Adrenal gland (tissue), 19 donors: ENCODE measurements at regions of chr2 and their contacts with region 1.

Region 1: DNA sequence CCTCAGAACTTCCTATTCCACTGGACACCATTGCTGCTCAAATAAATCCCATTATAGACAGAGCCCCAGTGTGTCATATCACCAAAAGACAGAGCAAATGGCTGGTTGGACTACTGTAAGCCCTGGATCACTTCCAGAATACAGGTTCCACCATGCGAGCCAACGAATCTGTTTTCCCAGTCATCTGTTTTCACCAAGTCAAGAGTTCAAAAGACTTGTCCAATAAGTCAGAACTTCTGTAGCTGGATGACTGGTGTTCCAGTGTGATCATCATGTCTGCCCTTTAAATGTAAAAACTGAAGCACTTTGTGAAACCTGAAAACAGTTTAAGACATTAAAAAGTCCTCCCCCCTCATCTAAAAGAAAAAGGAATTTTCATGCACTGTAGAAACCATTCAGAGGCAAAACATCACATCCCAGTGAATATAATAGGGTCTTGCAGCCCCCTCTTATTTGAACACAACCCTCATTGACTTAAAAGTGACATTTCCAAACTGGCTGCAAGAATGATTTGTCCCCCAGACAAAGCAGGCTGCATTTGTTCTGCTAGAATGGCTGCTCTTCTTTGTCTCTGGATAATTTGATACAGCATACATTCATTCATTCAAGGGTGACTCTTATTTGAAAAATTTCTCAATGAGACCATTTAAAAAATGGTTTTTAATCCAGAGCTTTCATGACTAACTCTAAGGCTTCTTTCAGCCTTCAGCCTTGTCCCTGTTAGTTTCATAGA is 64.6 kb upstream of the TANC1 start:
- DNase-seq: no peak
- H3K4me3 ChIP-seq: no peak overlapping the region
- H3K27ac ChIP-seq: no peak overlapping the region
- H3K4me1 ChIP-seq: no peaks in the 10 kb centered on the region
- H3K27me3 ChIP-seq: no peaks in the 10 kb centered on the region
- CTCF ChIP-seq: no peak
- POLR2A ChIP-seq: no peak

Region 2: DNA sequence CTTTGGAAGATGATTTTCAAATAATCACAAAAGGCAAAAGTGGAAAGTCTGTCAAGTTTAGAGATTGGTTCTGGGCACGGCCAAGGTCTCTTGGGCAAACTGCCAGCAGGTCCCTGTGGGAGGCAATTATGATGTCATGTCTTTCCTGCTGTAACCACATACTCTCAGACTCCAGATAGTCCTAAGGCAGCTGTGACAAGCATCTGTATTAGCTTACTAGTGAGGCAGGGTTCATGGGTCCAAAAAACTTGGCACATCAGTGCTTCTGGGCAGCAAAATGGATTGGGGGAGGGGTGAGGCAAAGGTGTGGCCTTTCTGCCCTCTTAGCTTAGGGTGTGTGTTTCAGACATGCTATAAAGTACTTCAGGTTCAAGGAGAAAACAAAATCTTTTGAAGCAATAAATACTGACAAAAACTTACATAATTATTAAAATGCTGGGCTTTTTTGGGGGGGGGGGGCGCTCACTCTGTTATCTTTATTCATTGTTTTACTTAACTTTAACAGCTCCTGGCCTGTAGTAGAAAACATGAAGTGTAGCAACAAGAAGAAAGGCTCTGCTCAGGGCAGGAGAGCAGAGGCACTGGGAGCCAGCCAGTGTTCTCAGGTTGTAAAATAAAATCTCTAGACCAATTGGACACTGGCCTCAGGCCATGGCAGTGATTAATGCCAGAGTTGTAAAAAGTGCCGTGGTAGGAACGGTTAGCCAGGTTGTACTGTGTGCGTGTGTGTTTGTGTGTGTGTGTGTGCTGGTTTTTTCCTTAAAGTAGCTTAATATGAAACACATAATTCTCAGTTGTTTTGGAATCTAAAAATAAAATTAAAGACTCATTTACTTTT is 50.3 kb after region 1 on chr2:
- intact Hi-C with region 1: loop called (anchors 10 kb)
- DNase-seq: peak; percentile 68 to 90 (median 82)
- H3K4me3 ChIP-seq: no peak overlapping the region
- H3K27ac ChIP-seq: peak overlapping the region in 3 of 5 donors; percentile 26 to 43 (median 43)
- H3K4me1 ChIP-seq: peaks cover 8 to 12% of the 10 kb centered on the region in 2 donors
- H3K27me3 ChIP-seq: no peaks in the 10 kb centered on the region
- CTCF ChIP-seq: no peak
- POLR2A ChIP-seq: peak in 1 of 2 donors; percentile 8

Region 3: DNA sequence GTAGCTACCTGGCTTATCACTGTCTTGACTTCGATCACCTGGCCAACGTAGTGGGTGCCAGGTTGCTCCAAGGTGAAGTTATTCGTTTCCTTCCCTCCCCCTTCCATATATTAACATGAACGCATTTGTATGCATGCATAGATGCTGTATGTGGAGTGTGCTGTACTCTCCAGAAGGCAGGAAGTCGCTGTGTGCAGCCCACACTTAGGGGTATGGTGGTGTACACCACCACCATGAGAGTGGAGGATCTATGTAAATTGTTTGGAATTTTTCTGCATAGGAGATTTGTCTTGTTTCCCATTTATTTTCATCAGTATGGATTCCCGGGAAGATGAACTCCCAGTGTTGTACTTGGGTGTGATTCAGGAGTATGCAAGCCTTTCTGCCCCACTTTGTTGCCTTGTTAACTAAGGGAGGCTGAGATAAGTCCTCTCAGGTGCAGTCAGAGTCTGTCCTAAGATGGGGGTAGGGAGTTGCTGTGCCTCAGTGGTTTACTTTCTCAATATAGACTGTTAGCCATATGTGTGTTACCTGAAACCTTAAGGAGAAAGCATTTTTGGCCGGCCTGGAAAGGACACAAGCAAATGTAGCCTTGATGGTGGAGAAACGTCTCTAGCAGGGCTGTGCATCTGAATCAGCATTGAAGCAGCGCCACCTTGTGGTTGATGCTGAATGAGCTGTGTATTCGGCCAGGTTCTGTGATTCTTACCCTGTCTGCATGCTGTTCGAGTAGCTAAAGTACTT is 214.4 kb after region 1 on chr2:
- intact Hi-C with region 1: loop called (anchors 5 kb)
- DNase-seq: peak; percentile 80 to 98 (median 90)
- H3K4me3 ChIP-seq: no peak overlapping the region
- H3K27ac ChIP-seq: no peak overlapping the region
- H3K4me1 ChIP-seq: peaks cover 0 to 9% of the 10 kb centered on the region in 2 donors
- H3K27me3 ChIP-seq: no peaks in the 10 kb centered on the region
- CTCF ChIP-seq: peak; percentile 91 to 96 (median 94)
- POLR2A ChIP-seq: no peak

Region 4: GRCh38 chr2:159124441-159124911 is 220.6 kb after region 1 on chr2:
- intact Hi-C with region 1: loop called (anchors 5 kb)
- DNase-seq: peak; percentile 41 to 87 (median 82)
- H3K4me3 ChIP-seq: no peak overlapping the region
- H3K27ac ChIP-seq: peak overlapping the region in 4 of 5 donors; percentile 32 to 70 (median 36)
- H3K4me1 ChIP-seq: peaks cover 15 to 27% of the 10 kb centered on the region in 2 donors
- H3K27me3 ChIP-seq: no peaks in the 10 kb centered on the region
- CTCF ChIP-seq: no peak
- POLR2A ChIP-seq: no peak